Activated CD4-positive, alpha-beta T cell treated with anti-CD3 and anti-CD28 coated beads, Interleukin-2, amount 10 ng/mL, durations not matched to agents 24 days and 14 days (primary cell): ENCODE measurements at regions of chr2 and their contacts with region 1.

Region 1: DNA sequence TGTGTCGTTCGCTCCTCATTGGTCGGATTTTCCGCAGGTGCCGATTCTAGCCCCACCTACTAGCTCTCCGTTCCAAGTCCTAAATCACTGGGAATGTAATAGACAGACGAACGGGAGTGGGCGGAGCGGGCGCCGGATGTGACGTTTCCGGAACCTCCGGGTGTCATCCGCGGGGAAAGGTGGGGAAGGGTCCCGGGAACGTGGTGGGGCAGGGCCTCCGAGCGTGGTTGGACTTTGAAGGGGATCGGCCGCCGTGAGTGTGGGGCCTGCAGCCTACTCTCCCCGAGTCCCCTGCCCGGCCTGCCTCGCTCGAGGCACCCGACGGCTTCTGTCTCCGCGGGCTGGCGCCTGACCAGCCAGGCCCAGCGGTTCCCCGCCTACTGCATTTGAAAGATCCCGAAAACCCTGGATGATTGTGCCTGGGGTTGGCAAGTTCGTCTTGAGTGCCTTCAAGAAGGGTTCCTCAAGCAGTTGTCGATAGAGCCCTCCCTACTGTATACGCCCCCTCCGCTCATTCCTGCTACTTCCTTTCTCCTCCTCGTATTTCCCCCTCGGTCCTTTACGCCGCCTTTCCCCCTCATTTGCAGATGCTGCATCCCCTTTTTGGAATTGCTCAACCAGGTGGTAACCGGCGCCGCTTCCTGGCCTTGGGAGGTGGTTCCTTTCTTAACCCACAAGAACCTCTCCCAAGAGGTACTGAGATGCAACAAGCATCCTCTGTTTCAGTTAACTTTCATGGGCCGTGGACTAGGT is at the start of gene STAMBP:
- DNase-seq: peak; percentile 98
- H3K4me3 Mint-ChIP-seq: peak within 1 kb of the TSS; percentile 97
- H3K27ac Mint-ChIP-seq: peak within 1 kb of the TSS; percentile 96
- H3K4me1 Mint-ChIP-seq: peaks cover 44% of the 10 kb centered on the region
- H3K27me3 Mint-ChIP-seq: peaks cover 2% of the 10 kb centered on the region
- total RNA-seq, gene STAMBP: 58.4 and 59.9 TPM in 2 replicates

Region 2: DNA sequence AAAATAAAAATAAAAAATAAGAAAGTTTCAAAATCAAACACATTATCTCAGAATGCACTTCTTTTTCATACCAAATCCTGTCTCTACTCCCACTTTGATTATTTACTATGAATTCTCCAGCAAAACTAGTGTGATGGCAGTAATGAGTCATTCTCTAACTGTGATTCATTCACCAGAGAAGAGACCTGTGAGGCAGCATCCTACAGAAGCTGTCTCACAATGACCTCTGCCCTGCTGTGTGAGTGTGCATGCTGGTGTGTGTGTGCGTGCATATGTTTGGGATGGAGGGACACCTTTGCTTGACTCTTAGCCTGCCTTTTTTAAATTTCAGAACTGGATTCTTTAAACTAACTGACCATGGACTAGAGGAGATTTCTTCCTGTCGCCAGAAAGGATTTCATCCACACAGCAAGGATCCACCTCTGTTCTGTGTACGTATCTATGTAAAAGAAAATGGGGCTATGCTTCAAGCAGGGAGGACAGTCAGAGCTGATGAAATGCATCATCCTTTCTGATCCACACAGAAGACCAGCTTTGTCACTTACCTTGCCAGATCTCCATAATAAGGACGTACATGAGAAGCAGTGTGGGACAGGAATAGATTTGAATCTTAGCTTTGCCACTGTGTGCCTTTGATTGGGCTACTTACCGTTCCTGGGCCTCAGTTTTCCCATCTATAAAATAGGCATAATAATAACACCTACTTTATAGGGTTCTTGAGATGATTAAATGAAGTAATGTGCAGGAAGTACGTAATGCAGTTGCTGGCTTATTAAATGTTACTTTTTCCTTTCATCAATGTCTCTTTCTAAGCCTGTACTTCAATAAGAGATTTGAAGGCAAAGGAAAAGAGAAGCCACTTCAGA is 31.0 kb after region 1 on chr2:
- intact Hi-C with region 1: loop called (anchors 1 kb)
- DNase-seq: peak; percentile 62
- H3K4me3 Mint-ChIP-seq: no peak overlapping the region
- H3K27ac Mint-ChIP-seq: peak overlapping the region; percentile 70
- H3K4me1 Mint-ChIP-seq: peaks cover 31% of the 10 kb centered on the region
- H3K27me3 Mint-ChIP-seq: no peaks in the 10 kb centered on the region

Region 3: GRCh38 chr2:73896362-73897239 is 67.6 kb after region 1 on chr2:
- intact Hi-C with region 1: no loop called
- DNase-seq: peak; percentile 84
- H3K4me3 Mint-ChIP-seq: peak overlapping the region; percentile 51
- H3K27ac Mint-ChIP-seq: peak overlapping the region; percentile 85
- H3K4me1 Mint-ChIP-seq: peaks cover 35% of the 10 kb centered on the region
- H3K27me3 Mint-ChIP-seq: no peaks in the 10 kb centered on the region

Region 4: DNA sequence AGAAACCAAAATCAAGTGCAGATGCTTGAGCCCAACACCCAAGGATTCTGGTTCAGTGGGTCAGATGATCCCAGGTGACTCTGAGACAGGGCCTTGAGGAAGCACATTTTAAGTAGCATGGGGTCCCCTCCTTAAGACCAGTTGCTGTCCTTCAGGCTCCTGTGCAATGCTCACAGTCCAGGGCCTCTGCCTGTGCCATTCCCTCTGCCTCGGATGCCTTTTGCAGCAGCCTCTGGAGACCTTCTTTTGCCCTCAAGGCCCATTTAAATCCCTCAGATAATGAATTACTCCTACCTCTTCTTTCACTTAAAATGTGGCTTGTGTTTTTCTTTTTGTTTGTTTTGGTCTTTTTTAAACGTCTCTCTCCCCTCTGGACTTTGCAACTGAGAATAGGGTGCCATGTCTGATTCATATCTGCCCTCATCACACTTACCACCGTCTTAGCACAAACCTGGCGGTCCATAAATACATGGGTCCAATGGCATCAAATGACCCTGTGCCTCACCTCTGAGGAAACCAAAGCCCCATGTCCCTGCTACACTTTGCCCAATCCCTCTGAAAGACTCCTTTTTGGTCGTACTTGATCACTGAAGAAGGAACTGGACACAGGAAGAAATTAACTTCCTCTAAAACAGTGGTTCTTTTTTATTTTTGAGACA is 78.0 kb after region 1 on chr2:
- intact Hi-C with region 1: no loop called
- DNase-seq: no peak
- H3K4me3 Mint-ChIP-seq: no peak overlapping the region
- H3K27ac Mint-ChIP-seq: no peak overlapping the region
- H3K4me1 Mint-ChIP-seq: peaks cover 14% of the 10 kb centered on the region
- H3K27me3 Mint-ChIP-seq: no peaks in the 10 kb centered on the region

Region 5: DNA sequence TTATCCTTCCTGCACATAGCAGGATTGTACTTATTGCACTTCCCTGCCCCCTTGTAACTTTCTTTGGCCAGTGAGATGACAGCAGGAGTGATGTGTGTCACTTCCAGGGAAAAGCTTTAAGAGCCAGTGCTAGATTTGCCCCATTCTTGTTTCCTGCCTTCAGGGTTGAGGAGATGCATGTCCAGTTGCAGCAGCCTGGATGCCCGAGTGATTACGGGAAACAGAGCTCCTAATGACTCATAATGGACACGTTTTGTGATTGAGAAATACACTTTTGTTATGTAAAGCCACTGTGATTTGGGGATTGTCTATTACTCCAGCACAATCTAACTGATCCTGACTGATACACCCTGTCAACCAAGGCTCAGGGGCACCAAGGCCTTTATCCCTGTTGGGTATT is 150.7 kb after region 1 on chr2:
- intact Hi-C with region 1: loop called (anchors 1 kb)
- DNase-seq: peak; percentile 58
- H3K4me3 Mint-ChIP-seq: peak overlapping the region; percentile 65
- H3K27ac Mint-ChIP-seq: peak overlapping the region; percentile 78
- H3K4me1 Mint-ChIP-seq: peaks cover 68% of the 10 kb centered on the region
- H3K27me3 Mint-ChIP-seq: peaks cover 9% of the 10 kb centered on the region

Region 6: DNA sequence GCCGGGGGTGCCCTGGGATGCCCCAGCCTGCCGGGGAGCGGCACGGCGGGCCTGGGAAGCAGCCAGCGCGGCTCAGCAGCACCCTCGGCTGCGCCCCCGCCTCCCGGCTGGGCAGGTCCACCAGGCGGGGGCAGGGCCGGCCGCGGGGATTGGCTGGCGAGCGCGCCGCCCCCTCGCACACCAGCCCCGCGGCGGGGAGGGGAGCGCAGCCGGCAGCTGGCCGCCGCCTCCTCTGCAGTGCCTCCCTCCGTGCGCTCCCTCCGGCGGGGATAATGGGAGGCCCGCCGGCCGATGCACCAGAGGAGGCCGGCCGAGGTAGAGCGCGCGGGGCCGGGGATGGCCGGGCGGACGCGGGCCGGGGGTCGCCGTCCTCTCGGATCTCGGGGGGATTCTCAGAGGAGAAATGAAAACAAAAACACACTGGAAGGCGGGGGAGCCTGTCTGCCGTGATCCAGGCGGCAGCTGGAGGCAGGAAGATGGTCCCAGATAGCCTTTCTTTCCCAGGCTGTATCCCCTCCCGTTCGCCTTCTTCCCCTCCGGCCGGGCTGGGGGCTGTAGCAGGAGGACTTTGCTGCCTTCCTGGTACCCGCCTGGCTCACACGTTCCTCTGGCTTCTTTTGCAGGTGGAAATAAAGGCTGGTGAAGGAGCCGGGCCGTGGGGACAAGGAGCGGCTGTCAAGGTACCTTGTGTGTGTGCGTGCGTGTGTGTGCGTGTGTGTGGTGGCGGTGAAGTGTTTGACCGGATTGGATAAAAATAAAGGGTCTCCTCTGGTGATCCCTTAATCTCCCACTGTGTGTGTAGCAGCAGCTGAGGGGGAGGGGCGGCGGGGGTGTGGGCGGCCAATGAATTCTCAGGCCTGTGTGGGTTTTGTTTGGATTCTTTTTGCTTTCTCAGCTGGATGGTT is 173.7 kb after region 1 on chr2:
- intact Hi-C with region 1: loop called (anchors 2 kb)
- DNase-seq: peak; percentile 95
- H3K4me3 Mint-ChIP-seq: peak overlapping the region; percentile 84
- H3K27ac Mint-ChIP-seq: peak overlapping the region; percentile 62
- H3K4me1 Mint-ChIP-seq: peaks cover 65% of the 10 kb centered on the region
- H3K27me3 Mint-ChIP-seq: no peaks in the 10 kb centered on the region

Region 7: DNA sequence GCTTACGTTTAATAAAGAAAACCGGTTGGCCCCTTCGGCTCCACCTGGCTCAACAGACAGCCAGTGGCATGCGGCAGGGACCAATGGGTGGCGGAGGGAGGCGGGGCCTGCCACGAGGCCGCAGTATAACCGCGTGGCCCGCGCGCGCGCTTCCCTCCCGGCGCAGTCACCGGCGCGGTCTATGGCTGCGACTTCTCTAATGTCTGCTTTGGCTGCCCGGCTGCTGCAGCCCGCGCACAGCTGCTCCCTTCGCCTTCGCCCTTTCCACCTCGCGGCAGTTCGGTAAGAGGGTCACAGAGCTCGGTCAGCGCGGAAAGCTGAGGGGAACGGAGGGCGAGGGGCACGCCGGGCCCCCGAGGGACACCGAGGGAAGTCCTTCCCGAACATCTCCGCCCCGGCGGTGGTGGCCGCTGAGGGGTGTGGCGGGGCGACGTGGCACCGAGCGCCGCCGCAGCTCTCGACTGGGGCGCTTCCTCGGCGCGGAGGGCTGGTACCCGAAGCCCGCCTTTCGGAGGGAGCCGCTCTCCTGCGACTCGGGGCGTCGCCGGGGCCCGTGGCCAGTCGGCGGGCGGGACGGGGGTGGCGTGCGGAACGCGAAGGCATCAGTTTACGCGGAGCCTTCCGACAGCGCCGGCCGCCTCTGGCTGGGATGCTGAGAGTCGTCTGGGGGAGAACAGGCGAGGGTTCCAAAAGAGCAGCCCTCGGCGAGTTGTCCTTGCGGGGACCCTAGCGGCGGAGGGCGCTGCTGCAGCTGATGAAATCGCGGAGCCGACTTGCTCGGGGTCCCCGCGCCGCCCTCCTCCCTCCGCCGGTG is 369.7 kb after region 1 on chr2 and contains the start of gene MTHFD2:
- intact Hi-C with region 1: loop called (anchors 2 kb)
- DNase-seq: peak; percentile 98
- H3K4me3 Mint-ChIP-seq: peak within 1 kb of the TSS; percentile 96
- H3K27ac Mint-ChIP-seq: peak within 1 kb of the TSS; percentile 100
- H3K4me1 Mint-ChIP-seq: peaks cover 38% of the 10 kb centered on the region
- H3K27me3 Mint-ChIP-seq: no peaks in the 10 kb centered on the region
- total RNA-seq, gene MTHFD2: 418 and 439 TPM in 2 replicates